CD8-positive, alpha-beta T cell (primary cell): ENCODE measurements at regions of chr19 and their contacts with region 1.

Region 1: DNA sequence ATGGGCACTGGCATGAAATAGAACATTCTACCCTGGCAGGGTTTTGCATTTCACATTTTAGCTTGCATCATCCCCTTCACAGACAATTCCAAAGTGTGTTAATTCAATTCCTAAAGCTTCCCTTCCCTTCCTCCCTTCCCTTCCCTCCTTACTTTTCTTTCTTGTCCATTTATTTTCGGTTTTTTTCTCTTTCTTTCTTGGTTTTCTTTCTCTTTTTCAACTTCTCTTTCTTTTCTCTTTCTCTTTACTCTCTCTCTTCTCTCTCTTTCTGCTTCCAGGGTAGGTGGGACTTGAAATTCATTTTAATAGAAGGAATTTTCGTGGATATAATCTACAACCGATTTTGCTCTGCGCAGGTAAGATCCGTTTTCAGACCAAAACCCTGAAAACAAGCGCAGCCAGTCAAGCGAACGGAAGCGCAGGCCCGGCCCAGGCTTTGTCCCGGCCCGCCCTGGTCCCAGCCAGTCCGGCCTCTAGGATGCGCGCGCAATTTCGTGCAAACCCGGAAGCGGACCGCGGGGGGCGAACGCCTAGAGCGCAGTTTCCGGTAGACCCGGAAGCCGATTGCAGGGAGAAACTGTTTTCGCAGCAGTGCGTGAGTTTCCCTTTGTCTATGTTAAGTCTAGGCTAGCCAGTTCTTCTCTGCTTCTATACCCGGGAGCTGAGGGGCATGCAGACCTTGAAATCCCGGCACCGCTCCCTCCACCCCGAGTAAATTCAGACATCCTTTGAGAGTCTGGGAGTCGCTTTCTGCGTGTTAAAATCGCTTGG is at the start of gene ZNF528:
- DNase-seq: peak; percentile 81 to 98 (median 95)
- ATAC-seq: peak; percentile 98
- H3K4me3 ChIP-seq: peak within 1 kb of the TSS; percentile 77 to 81
- H3K4me3 Mint-ChIP-seq: peak within 1 kb of the TSS; percentile 88
- H3K27ac ChIP-seq: peak within 1 kb of the TSS; percentile 67 to 83
- H3K27ac Mint-ChIP-seq: peak within 1 kb of the TSS; percentile 93
- H3K4me1 ChIP-seq: peaks cover 13% of the 10 kb centered on the region
- H3K4me1 Mint-ChIP-seq: peaks cover 25% of the 10 kb centered on the region
- H3K27me3 ChIP-seq: no peaks in the 10 kb centered on the region
- H3K27me3 Mint-ChIP-seq: no peaks in the 10 kb centered on the region
- CTCF ChIP-seq: no peak
- total RNA-seq, gene ZNF528: 12.2 to 15.3 TPM

Region 2: GRCh38 chr19:52269338-52270261 is 127.9 kb before region 1 on chr19 and contains the start of gene ZNF766:
- CTCF ChIA-PET with region 1: no interaction called
- POLR2A ChIA-PET with region 1: no interaction called
- intact Hi-C with region 1: loop called in 1 of 2 experiments (anchors 5 kb)
- DNase-seq: peak; percentile 95 to 98 (median 97)
- ATAC-seq: peak; percentile 98
- H3K4me3 ChIP-seq: peak within 1 kb of the TSS; percentile 89 to 95
- H3K4me3 Mint-ChIP-seq: peak within 1 kb of the TSS; percentile 98
- H3K27ac ChIP-seq: peak within 1 kb of the TSS; percentile 96
- H3K27ac Mint-ChIP-seq: peak within 1 kb of the TSS; percentile 98
- H3K4me1 ChIP-seq: peaks cover 13% of the 10 kb centered on the region
- H3K4me1 Mint-ChIP-seq: peaks cover 41% of the 10 kb centered on the region
- H3K27me3 ChIP-seq: no peaks in the 10 kb centered on the region
- H3K27me3 Mint-ChIP-seq: no peaks in the 10 kb centered on the region
- CTCF ChIP-seq: no peak
- total RNA-seq, gene ZNF766: 50.8 to 52.6 TPM

Region 3: DNA sequence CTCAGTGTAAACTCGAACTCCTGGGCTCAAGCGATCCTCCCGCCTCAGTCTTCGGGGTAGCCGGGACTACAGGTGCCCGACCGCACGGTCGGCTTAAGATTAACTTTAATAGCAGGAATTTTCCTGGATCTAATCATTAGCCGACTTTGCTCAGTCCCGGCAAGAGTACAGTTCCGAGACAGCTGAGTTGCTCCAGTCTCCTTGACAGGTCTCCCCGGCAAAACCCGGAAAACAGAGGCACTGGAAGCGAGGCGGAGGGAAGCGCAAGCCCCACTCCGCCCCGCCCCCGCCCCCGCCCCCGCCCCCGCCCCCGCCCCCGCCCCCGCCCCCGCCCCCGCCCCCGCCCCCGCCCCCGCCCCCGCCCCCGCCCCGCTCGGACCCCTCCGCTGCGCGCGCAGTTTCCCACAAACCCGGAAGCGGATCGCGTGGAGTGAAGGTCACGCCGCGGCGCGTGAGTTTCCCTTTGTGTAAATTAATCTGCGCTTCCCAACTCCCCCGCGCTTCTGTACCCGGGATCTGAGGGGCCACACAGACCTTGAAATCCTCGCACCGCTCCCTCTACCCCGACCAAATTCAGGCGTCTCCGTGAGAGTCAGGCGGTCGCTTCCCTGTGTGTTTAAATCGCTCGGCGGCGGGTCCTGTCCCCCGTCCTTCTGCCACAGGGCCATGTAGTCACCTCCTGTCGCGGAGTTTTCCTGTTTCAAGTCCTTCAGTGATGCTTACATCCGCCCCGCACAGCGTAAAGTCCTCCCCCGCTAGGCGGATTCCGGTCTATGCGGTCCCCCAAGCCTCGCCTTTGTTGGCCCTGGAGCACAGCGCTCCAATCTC is 100.5 kb before region 1 on chr19 and contains the start of gene ZNF480:
- CTCF ChIA-PET with region 1: no interaction called
- POLR2A ChIA-PET with region 1: no interaction called
- intact Hi-C with region 1: loop called in 1 of 2 experiments (anchors 1 kb)
- DNase-seq: peak; percentile 73 to 94 (median 89)
- ATAC-seq: peak; percentile 92
- H3K4me3 ChIP-seq: peak within 1 kb of the TSS; percentile 96 to 97
- H3K4me3 Mint-ChIP-seq: peak within 1 kb of the TSS; percentile 97
- H3K27ac ChIP-seq: peak within 1 kb of the TSS; percentile 93 to 98
- H3K27ac Mint-ChIP-seq: peak within 1 kb of the TSS; percentile 99
- H3K4me1 ChIP-seq: peaks cover 7% of the 10 kb centered on the region
- H3K4me1 Mint-ChIP-seq: peaks cover 20% of the 10 kb centered on the region
- H3K27me3 ChIP-seq: no peaks in the 10 kb centered on the region
- H3K27me3 Mint-ChIP-seq: no peaks in the 10 kb centered on the region
- CTCF ChIP-seq: no peak
- total RNA-seq, gene ZNF480: 7.8 to 9.1 TPM

Region 4: GRCh38 chr19:52336117-52336790 is 61.2 kb before region 1 on chr19 and contains the start of gene ZNF610:
- CTCF ChIA-PET with region 1: no interaction called
- POLR2A ChIA-PET with region 1: no interaction called
- intact Hi-C with region 1: loop called in 1 of 2 experiments (anchors 2 kb)
- DNase-seq: peak; percentile 71 to 91 (median 84)
- ATAC-seq: peak; percentile 96
- H3K4me3 ChIP-seq: peak within 1 kb of the TSS; percentile 70 to 87
- H3K4me3 Mint-ChIP-seq: peak within 1 kb of the TSS; percentile 98
- H3K27ac ChIP-seq: peak within 1 kb of the TSS; percentile 80 to 85
- H3K27ac Mint-ChIP-seq: peak within 1 kb of the TSS; percentile 99
- H3K4me1 ChIP-seq: peaks cover 6% of the 10 kb centered on the region
- H3K4me1 Mint-ChIP-seq: peaks cover 14% of the 10 kb centered on the region
- H3K27me3 ChIP-seq: no peaks in the 10 kb centered on the region
- H3K27me3 Mint-ChIP-seq: no peaks in the 10 kb centered on the region
- CTCF ChIP-seq: no peak
- total RNA-seq, gene ZNF610: 0.33 TPM

Region 5: DNA sequence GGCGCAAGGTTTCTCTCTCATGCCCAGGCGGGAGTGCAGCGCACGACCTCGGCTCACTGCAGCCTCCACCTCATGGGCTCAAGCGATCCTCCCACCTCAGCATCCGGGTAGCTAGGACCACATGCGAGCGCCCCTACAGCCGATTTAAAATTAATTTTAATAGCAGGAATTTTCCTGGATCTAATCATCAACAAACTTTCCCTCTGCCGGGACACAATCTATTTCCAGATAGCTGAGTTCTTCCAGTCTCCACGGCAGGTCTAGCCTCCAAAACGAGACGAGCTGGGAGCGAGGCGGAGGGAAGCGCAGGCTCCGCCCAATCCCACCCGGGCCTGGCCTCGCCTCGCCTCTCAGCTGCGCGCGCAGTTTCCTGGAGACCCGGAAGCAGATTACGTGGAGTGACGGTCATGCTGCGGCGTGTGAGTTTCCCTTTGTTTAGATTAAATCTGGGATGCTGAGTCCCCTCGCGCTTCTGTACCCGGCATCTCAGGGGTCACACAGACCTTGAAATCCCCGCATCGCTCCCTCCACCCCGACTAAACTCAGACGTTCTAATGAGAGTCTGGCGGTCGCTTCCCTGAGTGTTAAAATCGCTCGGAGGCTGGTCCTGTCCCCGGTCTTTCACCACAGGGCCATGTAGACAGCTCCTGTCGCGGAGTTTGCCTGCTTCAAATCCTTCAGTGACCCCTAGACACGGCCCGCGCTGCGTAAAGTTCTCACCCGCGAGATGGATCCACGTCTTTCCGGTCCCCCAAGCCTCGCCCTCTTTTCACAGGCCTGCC is 27.7 kb before region 1 on chr19 and contains the start of gene ZNF880:
- CTCF ChIA-PET with region 1: interaction called, 4 read pairs
- POLR2A ChIA-PET with region 1: interaction called, 8 read pairs
- intact Hi-C with region 1: loop called (anchors 1 kb)
- DNase-seq: peak; percentile 77 to 93 (median 91)
- ATAC-seq: peak; percentile 95
- H3K4me3 ChIP-seq: peak within 1 kb of the TSS; percentile 68 to 69
- H3K4me3 Mint-ChIP-seq: peak within 1 kb of the TSS; percentile 94
- H3K27ac ChIP-seq: peak within 1 kb of the TSS; percentile 93 to 98
- H3K27ac Mint-ChIP-seq: peak within 1 kb of the TSS; percentile 98
- H3K4me1 ChIP-seq: peaks cover 8% of the 10 kb centered on the region
- H3K4me1 Mint-ChIP-seq: peaks cover 20% of the 10 kb centered on the region
- H3K27me3 ChIP-seq: no peaks in the 10 kb centered on the region
- H3K27me3 Mint-ChIP-seq: no peaks in the 10 kb centered on the region
- CTCF ChIP-seq: no peak
- total RNA-seq, gene ZNF880: 26.1 to 31.0 TPM

Region 6: GRCh38 chr19:52453324-52454094 is 56.0 kb after region 1 on chr19 and contains the start of gene ZNF578:
- CTCF ChIA-PET with region 1: no interaction called
- POLR2A ChIA-PET with region 1: interaction called, 4 read pairs
- intact Hi-C with region 1: loop called in 1 of 2 experiments (anchors 2 kb)
- DNase-seq: peak; percentile 22 to 77 (median 65)
- ATAC-seq: peak; percentile 88
- H3K4me3 ChIP-seq: peak within 1 kb of the TSS; percentile 44 to 59
- H3K4me3 Mint-ChIP-seq: peak within 1 kb of the TSS; percentile 87
- H3K27ac ChIP-seq: peak within 1 kb of the TSS in 1 of 2 experiments; percentile 38
- H3K27ac Mint-ChIP-seq: peak within 1 kb of the TSS; percentile 82
- H3K4me1 ChIP-seq: no peaks in the 10 kb centered on the region
- H3K4me1 Mint-ChIP-seq: peaks cover 16% of the 10 kb centered on the region
- H3K27me3 ChIP-seq: peaks cover 0 to 2% of the 10 kb centered on the region in 2 experiments
- H3K27me3 Mint-ChIP-seq: peaks cover 8% of the 10 kb centered on the region
- CTCF ChIP-seq: no peak
- total RNA-seq, gene ZNF578: 1.5 to 1.8 TPM

Region 7: DNA sequence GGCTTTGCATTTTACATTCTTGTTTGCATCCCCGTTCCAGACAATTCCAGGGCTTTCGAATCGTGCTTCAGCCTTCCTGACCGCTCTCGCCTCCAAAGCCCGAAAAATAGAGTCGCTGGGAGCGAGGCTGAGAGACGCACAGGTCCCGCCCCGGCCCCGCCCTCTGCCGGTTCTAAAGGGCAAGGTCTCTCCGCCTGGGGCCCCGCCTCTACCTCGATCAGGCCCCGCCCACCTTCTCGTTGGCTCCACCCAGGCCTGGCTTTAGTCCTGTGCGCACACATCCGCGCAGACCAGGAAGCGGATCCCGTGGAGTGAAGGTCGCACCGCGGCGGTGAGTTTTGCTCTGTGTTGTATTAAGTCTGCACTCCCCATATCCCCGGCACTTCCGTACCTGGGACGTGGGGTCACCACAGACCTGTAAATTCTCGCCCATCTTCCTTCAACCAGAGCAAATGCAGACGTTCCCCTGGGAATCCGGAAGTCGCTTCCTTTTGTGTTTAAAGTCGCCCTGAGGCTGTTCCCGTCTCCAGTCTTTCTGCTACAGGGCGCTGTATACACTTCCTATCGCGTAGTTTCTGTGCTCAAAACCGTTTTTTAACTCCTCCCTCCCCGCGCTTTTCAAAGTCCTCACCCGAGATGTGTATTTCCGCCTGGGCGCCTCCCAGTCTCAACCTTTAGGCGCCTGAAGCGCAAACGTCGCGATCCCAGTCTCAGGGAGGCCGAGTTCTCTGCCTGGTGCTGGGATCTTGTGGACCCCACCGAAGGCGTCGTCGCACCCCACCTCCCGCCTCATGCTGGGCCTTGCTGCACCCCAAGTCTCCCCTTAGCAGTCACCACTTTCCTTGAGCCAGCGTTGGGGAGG is 172.7 kb after region 1 on chr19 and contains the start of gene ZNF701:
- CTCF ChIA-PET with region 1: no interaction called
- POLR2A ChIA-PET with region 1: no interaction called
- intact Hi-C with region 1: loop called (anchors 1 to 5 kb)
- DNase-seq: peak; percentile 93 to 97 (median 95)
- ATAC-seq: peak; percentile 98
- H3K4me3 ChIP-seq: peak within 1 kb of the TSS; percentile 81 to 96
- H3K4me3 Mint-ChIP-seq: peak within 1 kb of the TSS; percentile 90
- H3K27ac ChIP-seq: peak within 1 kb of the TSS; percentile 77 to 91
- H3K27ac Mint-ChIP-seq: peak within 1 kb of the TSS; percentile 93
- H3K4me1 ChIP-seq: peaks cover 12% of the 10 kb centered on the region
- H3K4me1 Mint-ChIP-seq: peaks cover 42% of the 10 kb centered on the region
- H3K27me3 ChIP-seq: no peaks in the 10 kb centered on the region
- H3K27me3 Mint-ChIP-seq: no peaks in the 10 kb centered on the region
- CTCF ChIP-seq: peak; percentile 30
- total RNA-seq, gene ZNF701: 11.2 to 11.9 TPM